Right ventricle myocardium inferior (tissue), 1 donor: ENCODE measurements at regions of chr1 and their contacts with region 1.

Region 1: GRCh38 chr1:84506002-84506728 is at the starts of genes GNG5 and SPATA1:
- DNase-seq: peak; percentile 100
- ATAC-seq: peak; percentile 98
- total RNA-seq, gene GNG5: 182 TPM
- total RNA-seq, gene SPATA1: 0.92 TPM

Region 2: DNA sequence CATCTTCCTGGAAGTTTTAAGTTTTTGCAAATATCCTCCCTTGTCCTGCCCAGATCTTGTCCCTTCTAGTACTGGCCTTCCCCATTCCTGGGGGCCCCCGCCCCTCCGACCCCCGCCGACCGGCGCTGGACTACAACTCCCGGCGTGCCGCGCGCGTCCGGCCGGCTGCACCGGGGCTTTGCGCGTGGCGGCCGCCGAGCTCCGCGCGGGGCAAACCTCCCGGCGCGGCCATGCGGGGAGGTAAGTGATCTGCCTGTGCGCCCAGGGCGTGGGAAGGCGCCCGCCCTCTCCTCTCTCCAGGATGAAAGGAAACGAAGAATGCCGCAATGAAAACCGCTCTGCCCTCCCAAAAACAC is 207.9 kb before region 1 on chr1:
- intact Hi-C with region 1: loop called (anchors 2 kb)
- DNase-seq: peak; percentile 81
- ATAC-seq: peak; percentile 90

Region 3: GRCh38 chr1:84478876-84479868 is 27.0 kb before region 1 on chr1 and contains the start of gene RPF1:
- intact Hi-C with region 1: loop called (anchors 1 kb)
- DNase-seq: peak; percentile 82
- ATAC-seq: peak; percentile 96
- total RNA-seq, gene RPF1: 34.2 TPM

Region 4: GRCh38 chr1:84573967-84574842 is 68.0 kb after region 1 on chr1 and contains the start of gene CTBS:
- intact Hi-C with region 1: loop called (anchors 2 kb)
- DNase-seq: peak; percentile 95
- ATAC-seq: peak; percentile 99
- total RNA-seq, gene CTBS: 6.0 TPM

Region 5: GRCh38 chr1:84620720-84621313 is 114.7 kb after region 1 on chr1:
- intact Hi-C with region 1: loop called (anchors 10 kb)
- DNase-seq: peak; percentile 90
- ATAC-seq: peak; percentile 95

Region 6: GRCh38 chr1:84690397-84691121 is 184.4 kb after region 1 on chr1 and contains the start of gene SSX2IP:
- intact Hi-C with region 1: loop called (anchors 2 kb)
- DNase-seq: peak; percentile 97
- ATAC-seq: peak; percentile 98
- total RNA-seq, gene SSX2IP: 12.9 TPM